Left ventricle myocardium superior (tissue), 1 donor: ENCODE measurements at regions of chr11 and their contacts with region 1.

Region 1: DNA sequence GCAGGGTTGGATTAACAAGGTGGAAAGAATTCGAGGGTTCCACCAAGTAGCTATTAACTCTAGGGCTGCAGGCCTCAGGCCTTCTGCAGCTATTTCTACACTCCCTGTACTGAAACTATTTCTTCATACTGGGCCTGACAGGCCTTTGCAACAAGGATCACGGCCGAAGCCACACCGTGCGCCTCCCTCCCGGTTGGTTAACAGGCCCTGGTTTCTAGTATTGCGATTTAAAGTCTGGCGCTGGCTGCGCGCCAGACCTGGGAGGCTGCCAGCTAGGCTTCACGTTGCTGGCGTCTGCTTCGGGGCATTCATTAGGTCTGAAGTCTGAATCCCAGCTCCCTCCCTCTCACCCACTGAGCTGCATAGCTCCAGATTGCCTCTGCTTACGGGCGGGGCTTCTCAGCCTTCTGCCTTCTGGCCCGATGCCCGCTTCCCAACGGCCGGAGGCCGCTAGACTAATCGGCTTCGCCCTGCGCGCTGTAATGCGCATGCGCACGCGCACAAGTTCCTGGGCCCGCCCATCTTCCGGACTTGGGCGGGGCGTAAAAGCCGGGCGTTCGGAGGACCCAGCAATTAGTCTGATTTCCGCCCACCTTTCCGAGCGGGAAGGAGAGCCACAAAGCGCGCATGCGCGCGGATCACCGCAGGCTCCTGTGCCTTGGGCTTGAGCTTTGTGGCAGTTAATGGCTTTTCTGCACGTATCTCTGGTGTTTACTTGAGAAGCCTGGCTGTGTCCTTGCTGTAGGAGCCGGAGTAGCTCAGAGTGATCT is 1.6 kb downstream of the LDHA start:
- DNase-seq: peak; percentile 99
- ATAC-seq: peak; percentile 90

Region 2: GRCh38 chr11:18304745-18305144 is 91.2 kb before region 1 on chr11:
- intact Hi-C with region 1: no loop called
- DNase-seq: no peak
- ATAC-seq: no peak

Region 3: DNA sequence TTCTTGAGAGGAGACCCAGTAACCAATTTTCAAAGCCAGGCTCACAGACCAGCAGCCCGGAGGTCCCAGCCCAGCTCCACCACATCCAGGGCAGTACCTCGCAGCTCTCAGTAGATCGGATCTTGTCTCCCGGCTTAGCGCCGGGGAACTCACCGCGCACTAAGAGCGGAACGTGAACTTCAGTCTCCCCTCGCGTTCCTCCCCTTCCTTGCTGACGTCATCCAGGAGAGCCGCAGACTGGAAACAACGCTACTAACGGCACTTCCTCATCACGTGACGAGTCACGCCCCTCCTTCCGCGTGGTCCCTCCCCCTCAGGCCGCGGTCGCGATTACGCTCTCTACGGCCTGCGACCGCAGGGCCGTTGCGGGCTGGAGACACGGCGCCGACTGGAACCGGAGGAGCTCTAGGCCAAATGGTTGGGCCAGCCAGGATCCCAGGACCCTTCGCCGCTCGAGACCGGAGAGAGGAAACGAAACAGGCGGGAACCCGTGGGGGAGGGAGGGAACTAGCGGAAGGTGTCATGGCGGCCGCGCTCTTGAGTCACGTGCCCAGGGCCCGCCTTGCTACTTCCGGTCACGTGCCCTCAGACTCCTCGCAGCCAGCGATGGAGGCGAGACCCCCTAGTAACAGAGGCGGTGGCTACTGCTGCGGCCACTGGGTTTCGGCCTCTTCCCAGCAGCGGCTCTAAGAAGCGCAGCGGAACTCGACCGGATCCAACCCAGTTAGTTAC is 73.8 kb before region 1 on chr11 and contains the starts of genes GTF2H1 and HPS5:
- intact Hi-C with region 1: loop called (anchors 10 kb)
- DNase-seq: peak; percentile 95
- ATAC-seq: peak; percentile 99
- total RNA-seq, gene GTF2H1: 26.6 TPM
- total RNA-seq, gene HPS5: 12.4 TPM